ENCODE measurements at regions of chr17 and their contacts with region 1.

Region 1: GRCh38 chr17:66301797-66302741 is at the start of gene PRKCA:
- DNase-seq: peak; percentile 94
- H3K4me3 Mint-ChIP-seq: peak within 1 kb of the TSS; percentile 96
- H3K27ac Mint-ChIP-seq: peak within 1 kb of the TSS; percentile 98
- H3K4me1 Mint-ChIP-seq: peaks cover 43% of the 10 kb centered on the region
- H3K27me3 Mint-ChIP-seq: no peaks in the 10 kb centered on the region
- total RNA-seq, gene PRKCA: 164 TPM in 2 replicates

Region 2: GRCh38 chr17:66255112-66255511 is 47.0 kb before region 1 on chr17:
- intact Hi-C with region 1: loop called (anchors 5 kb)
- DNase-seq: peak; percentile 84
- H3K4me3 Mint-ChIP-seq: peak overlapping the region; percentile 66
- H3K27ac Mint-ChIP-seq: peak overlapping the region; percentile 52
- H3K4me1 Mint-ChIP-seq: peaks cover 15% of the 10 kb centered on the region
- H3K27me3 Mint-ChIP-seq: no peaks in the 10 kb centered on the region

Region 3: DNA sequence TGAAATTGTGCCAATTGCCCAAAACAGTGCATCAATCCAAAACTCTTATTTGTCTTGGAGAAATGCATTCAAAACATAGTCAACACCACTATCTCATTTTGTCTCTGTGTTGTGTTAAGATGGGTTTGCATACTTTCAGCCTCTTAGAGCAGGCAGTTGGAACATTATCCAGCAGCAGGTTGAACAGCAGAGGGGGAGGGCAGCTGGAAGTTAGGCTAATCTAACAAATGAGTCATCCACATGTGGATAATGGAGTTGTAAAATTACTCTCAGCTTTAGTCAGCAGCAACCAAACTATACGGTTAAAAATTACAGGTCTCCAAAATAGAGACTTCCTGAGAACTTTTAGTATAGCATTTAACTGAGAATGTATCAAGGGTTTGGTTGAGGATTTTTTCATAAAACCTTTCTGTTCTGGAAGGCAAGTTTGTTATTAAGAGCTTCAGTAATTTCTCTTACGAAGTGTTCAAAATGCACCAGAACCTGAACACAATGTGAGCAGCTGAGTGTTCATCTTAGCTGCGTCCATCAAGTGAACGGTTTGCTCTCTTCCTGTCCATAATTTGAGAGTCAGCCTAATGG is 46.6 kb after region 1 on chr17:
- intact Hi-C with region 1: loop called (anchors 1 kb)
- DNase-seq: peak; percentile 64
- H3K4me3 Mint-ChIP-seq: peak overlapping the region; percentile 32
- H3K27ac Mint-ChIP-seq: peak overlapping the region; percentile 84
- H3K4me1 Mint-ChIP-seq: peaks cover 56% of the 10 kb centered on the region
- H3K27me3 Mint-ChIP-seq: no peaks in the 10 kb centered on the region

Region 4: GRCh38 chr17:66426397-66427033 is 124.4 kb after region 1 on chr17:
- intact Hi-C with region 1: loop called (anchors 2 kb)
- DNase-seq: peak; percentile 87
- H3K4me3 Mint-ChIP-seq: peak overlapping the region; percentile 28
- H3K27ac Mint-ChIP-seq: peak overlapping the region; percentile 59
- H3K4me1 Mint-ChIP-seq: peaks cover 66% of the 10 kb centered on the region
- H3K27me3 Mint-ChIP-seq: no peaks in the 10 kb centered on the region

Region 5: DNA sequence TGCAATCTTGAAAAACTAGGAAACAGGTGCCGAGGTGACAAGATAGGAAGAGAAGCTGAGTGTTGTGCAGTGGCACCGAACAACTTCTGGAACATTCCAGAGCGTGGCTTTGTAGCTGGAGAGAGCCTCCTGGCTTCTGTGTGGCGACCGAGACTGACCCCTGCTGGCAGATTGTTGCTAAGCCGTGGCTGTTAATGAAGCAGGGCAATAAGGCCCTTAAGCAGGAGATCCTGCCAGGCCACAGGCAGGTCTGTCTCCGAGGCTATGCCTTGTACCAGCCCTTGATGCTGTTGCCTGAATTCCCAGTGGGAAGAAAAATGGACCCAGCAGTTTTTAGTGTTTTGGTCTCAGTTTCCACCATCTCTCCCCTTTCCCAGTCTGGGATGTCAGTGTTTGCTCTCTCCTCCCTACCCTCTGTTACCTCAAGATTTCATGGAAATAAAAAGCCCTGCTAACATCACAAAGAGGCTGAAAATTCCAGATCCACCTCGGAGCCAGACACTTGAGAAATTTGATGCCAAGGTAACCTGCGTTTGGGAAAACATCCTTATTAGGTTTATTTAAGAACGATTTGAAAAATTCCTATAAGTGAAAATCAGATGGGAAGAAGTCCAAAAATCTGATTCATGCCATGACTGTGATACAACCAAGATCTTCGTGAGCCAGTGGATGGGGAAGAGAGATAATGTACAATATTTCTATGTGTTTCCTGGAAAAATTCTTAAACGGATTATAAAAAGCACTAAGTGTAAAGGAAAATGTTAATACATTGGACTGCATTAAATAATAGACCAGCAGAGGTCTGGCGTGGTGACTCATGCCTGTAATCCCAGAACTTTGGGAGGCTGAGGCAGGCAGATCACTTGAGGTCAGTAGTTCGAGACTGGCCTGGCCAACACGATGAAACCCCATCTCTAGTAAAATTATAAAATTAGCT is 265.4 kb after region 1 on chr17:
- intact Hi-C with region 1: loop called (anchors 5 kb)
- DNase-seq: peak; percentile 93
- H3K4me3 Mint-ChIP-seq: no peak overlapping the region
- H3K27ac Mint-ChIP-seq: peak overlapping the region; percentile 14
- H3K4me1 Mint-ChIP-seq: peaks cover 34% of the 10 kb centered on the region
- H3K27me3 Mint-ChIP-seq: no peaks in the 10 kb centered on the region

Region 6: GRCh38 chr17:66667491-66668030 is 365.5 kb after region 1 on chr17:
- intact Hi-C with region 1: loop called (anchors 5 kb)
- DNase-seq: peak; percentile 89
- H3K4me3 Mint-ChIP-seq: peak overlapping the region; percentile 73
- H3K27ac Mint-ChIP-seq: peak overlapping the region; percentile 91
- H3K4me1 Mint-ChIP-seq: peaks cover 71% of the 10 kb centered on the region
- H3K27me3 Mint-ChIP-seq: peaks cover 2% of the 10 kb centered on the region